Gastrocnemius medialis (tissue), 4 donors: ENCODE measurements at regions of chr1 and their contacts with region 1.

Region 1: GRCh38 chr1:84772428-84772943 is 82.2 kb upstream of the SSX2IP start:
- DNase-seq: peak; percentile 22 to 52
- ATAC-seq: peak in 1 of 2 donors; percentile 75
- H3K4me3 ChIP-seq: no peak overlapping the region
- H3K27ac ChIP-seq: no peak overlapping the region
- H3K4me1 ChIP-seq: no peaks in the 10 kb centered on the region
- H3K27me3 ChIP-seq: no peaks in the 10 kb centered on the region
- CTCF ChIP-seq: peak; percentile 74 to 93 (median 83)
- POLR2A ChIP-seq: no peak

Region 2: GRCh38 chr1:83931658-83932253 is 840.7 kb before region 1 on chr1:
- in situ Hi-C with region 1: loop called in 2 of 4 experiments (anchors 25 kb)
- intact Hi-C with region 1: loop called (anchors 10 kb)
- DNase-seq: no peak
- ATAC-seq: peak; percentile 61 to 88
- H3K4me3 ChIP-seq: no peak overlapping the region
- H3K27ac ChIP-seq: no peak overlapping the region
- H3K4me1 ChIP-seq: peaks cover 8 to 9% of the 10 kb centered on the region in 2 donors
- H3K27me3 ChIP-seq: no peaks in the 10 kb centered on the region
- CTCF ChIP-seq: peak in 4 of 5 experiments; percentile 58 to 78 (median 68)
- POLR2A ChIP-seq: no peak

Region 3: GRCh38 chr1:84143796-84144565 is 628.5 kb before region 1 on chr1 and contains the start of gene PRKACB:
- in situ Hi-C with region 1: loop called in 3 of 4 experiments (anchors 25 kb)
- intact Hi-C with region 1: loop called (anchors 10 kb)
- DNase-seq: no peak
- ATAC-seq: no peak
- H3K4me3 ChIP-seq: peak within 1 kb of the TSS in 1 of 4 donors; percentile 6
- H3K27ac ChIP-seq: no peak within 1 kb of the TSS
- H3K4me1 ChIP-seq: no peaks in the 10 kb centered on the region
- H3K27me3 ChIP-seq: no peaks in the 10 kb centered on the region
- CTCF ChIP-seq: no peak
- POLR2A ChIP-seq: peak in 1 of 2 donors; percentile 25
- total RNA-seq, gene PRKACB: 4.2 to 12.4 (median 7.0) TPM

Region 4: DNA sequence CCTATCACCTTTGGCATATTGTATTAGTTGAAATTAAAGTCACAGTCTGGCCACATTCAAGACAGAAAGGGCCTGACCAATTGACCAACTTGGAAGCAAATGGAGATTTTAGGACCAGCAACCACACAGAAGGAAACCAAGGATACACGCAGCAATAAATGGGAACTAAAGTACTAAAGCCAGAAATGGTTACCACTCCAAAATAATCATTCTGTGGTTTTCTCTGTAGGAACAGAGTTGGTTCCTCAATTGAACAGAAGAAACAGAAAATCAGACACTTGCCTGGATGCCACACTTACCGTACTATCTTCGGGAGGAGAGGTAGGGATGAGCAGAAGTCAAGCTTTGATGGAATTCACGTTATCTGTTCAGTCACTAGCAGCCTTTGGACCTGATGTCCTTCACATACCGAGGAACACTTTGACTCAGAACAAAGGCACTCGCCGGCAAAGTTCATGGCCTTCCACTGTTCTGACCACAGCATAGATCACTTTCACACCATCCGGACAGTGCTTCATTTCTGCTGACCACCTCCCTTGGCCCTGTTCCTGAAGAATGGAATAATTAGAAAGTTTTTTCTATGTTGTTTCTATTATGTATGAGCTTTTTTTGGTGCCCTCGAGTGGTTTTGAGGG is 23.6 kb after region 1 on chr1:
- in situ Hi-C with region 1: no loop called
- intact Hi-C with region 1: no loop called
- DNase-seq: no peak
- ATAC-seq: no peak
- H3K4me3 ChIP-seq: no peak overlapping the region
- H3K27ac ChIP-seq: no peak overlapping the region
- H3K4me1 ChIP-seq: no peaks in the 10 kb centered on the region
- H3K27me3 ChIP-seq: no peaks in the 10 kb centered on the region
- CTCF ChIP-seq: no peak
- POLR2A ChIP-seq: no peak